Gastrocnemius medialis (tissue), 4 donors: ENCODE measurements at regions of chr14 and their contacts with region 1.

Region 1: GRCh38 chr14:98651042-98651441 is 621.0 kb downstream of the BCL11B start:
- DNase-seq: no peak
- ATAC-seq: no peak
- H3K4me3 ChIP-seq: no peak overlapping the region
- H3K27ac ChIP-seq: no peak overlapping the region
- H3K4me1 ChIP-seq: no peaks in the 10 kb centered on the region
- H3K27me3 ChIP-seq: no peaks in the 10 kb centered on the region
- CTCF ChIP-seq: no peak
- POLR2A ChIP-seq: no peak

Region 2: DNA sequence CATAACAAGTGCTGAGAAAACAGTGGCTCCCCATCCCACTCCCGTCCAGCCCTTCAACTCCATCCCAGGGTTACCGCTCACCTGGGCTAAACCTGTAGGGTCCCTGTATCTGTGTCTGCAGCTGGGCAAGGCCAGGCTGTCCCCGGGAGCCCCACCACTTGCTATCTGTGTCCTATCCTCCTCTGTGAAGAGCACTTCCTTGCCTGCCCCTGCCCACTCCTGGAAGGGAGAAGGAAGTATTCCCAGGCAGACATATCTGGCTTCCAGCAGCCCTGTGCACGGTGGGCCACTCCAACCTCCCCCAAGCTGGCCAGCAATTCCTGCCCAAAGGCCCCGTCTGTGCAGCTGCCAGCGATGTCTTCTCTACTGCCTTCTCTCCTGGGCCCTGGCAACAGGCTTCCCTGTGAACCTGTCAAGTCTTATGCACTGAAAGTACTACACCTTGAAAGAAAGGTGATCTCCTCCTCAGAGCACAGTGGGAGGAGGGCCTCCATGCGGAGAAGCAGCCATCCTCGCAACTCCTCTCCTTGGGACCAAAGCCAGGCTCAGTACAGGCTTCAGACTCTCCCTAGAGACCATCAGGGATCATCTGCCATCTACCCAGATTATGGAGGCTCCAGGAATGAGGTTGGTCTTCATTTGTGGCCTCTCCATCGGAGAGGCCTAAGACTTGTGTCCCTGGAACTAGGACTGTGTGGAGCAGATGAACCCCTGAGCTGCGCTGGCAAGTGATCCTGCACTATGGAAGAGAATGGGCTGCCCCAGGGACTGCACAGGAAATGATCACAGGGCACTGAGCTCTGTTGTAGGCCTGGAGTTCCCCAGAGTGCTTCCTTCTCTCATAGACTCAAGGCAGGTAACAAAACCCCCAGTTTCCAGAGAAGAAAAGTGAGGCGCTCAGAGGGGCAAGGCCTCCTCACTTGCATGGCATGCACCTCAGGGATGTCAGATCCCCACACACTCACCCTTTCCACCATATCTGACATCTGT is 42.7 kb before region 1 on chr14:
- in situ Hi-C with region 1: no loop called
- intact Hi-C with region 1: no loop called
- DNase-seq: no peak
- ATAC-seq: no peak
- H3K4me3 ChIP-seq: no peak overlapping the region
- H3K27ac ChIP-seq: no peak overlapping the region
- H3K4me1 ChIP-seq: no peaks in the 10 kb centered on the region
- H3K27me3 ChIP-seq: no peaks in the 10 kb centered on the region
- CTCF ChIP-seq: no peak
- POLR2A ChIP-seq: no peak

Region 3: GRCh38 chr14:98692857-98693256 is 41.8 kb after region 1 on chr14:
- in situ Hi-C with region 1: no loop called
- intact Hi-C with region 1: loop called (anchors 1 kb)
- DNase-seq: no peak
- ATAC-seq: no peak
- H3K4me3 ChIP-seq: no peak overlapping the region
- H3K27ac ChIP-seq: no peak overlapping the region
- H3K4me1 ChIP-seq: no peaks in the 10 kb centered on the region
- H3K27me3 ChIP-seq: no peaks in the 10 kb centered on the region
- CTCF ChIP-seq: no peak
- POLR2A ChIP-seq: no peak